PC-3 (cell line): ENCODE measurements at regions of chr3 and their contacts with region 1.

Region 1: GRCh38 chr3:65342084-65342683 is 654.4 kb upstream of the ADAMTS9 start:
- DNase-seq: peak; percentile 61
- ATAC-seq: peak; percentile 94
- H3K4me3 ChIP-seq: no peak overlapping the region
- H3K27ac ChIP-seq: no peak overlapping the region
- H3K4me1 ChIP-seq: no peaks in the 10 kb centered on the region
- H3K27me3 ChIP-seq: no peaks in the 10 kb centered on the region
- CTCF ChIP-seq: peak; percentile 65

Region 2: DNA sequence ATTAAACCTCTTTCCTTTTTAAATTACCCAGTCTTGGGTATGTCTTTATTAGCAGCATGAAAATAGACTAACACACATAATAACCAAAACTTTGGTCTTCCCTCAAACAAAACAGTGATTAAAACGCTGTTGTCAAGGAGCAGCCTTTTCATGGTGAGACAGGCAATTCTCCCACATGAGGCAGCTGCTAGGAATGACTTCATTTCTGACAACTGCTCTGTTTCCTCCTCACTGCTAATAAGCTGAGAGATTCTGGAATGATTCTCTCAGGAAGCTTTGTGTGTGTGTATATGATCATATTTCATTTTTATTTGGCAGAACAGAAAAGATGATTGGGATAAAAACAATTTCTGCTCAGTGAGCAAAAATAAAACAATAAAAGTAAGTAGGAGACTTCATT is 73.8 kb before region 1 on chr3:
- CTCF ChIA-PET with region 1: no interaction called
- POLR2A ChIA-PET with region 1: no interaction called
- intact Hi-C with region 1: no loop called
- DNase-seq: no peak
- ATAC-seq: no peak
- H3K4me3 ChIP-seq: no peak overlapping the region
- H3K27ac ChIP-seq: no peak overlapping the region
- H3K4me1 ChIP-seq: no peaks in the 10 kb centered on the region
- H3K27me3 ChIP-seq: no peaks in the 10 kb centered on the region
- CTCF ChIP-seq: no peak

Region 3: DNA sequence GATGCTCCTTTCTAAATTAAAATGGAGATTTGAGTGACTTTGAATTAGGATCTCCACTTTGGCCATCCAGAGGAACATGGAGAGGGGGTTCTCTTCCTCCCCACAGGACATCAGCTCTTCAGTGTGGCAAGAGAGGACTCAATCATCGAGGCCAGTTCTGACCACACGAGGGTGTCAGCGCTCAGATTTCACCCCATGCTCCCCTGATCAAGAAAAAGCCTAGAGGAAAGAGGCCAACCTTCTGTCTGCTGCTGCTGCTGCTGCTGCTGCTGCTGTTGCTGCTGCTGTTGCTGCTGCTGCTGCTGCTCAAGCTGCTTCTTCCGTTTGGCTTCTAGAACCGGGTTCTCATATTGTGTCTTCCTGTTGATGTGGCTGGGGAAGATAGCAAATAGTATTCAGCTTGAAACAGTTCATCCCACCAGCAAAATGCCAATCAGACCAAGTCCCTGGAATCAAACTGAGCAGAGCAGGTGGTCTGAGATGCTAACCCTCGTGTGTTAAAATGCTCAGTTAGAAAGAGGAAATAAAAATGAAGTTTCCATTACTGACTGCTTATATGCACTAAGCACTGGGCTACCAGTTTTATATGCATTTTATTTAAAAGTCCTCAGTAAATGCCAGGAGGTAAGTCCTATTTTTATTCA is 97.6 kb after region 1 on chr3:
- CTCF ChIA-PET with region 1: no interaction called
- POLR2A ChIA-PET with region 1: no interaction called
- intact Hi-C with region 1: loop called (anchors 2 kb)
- DNase-seq: peak; percentile 43
- ATAC-seq: peak; percentile 89
- H3K4me3 ChIP-seq: no peak overlapping the region
- H3K27ac ChIP-seq: no peak overlapping the region
- H3K4me1 ChIP-seq: no peaks in the 10 kb centered on the region
- H3K27me3 ChIP-seq: no peaks in the 10 kb centered on the region
- CTCF ChIP-seq: peak; percentile 43

Region 4: GRCh38 chr3:65672871-65673815 is 331.0 kb after region 1 on chr3:
- CTCF ChIA-PET with region 1: no interaction called
- POLR2A ChIA-PET with region 1: no interaction called
- intact Hi-C with region 1: loop called (anchors 2 kb)
- DNase-seq: peak; percentile 52
- ATAC-seq: peak; percentile 45
- H3K4me3 ChIP-seq: no peak overlapping the region
- H3K27ac ChIP-seq: no peak overlapping the region
- H3K4me1 ChIP-seq: no peaks in the 10 kb centered on the region
- H3K27me3 ChIP-seq: no peaks in the 10 kb centered on the region
- CTCF ChIP-seq: peak; percentile 71

Region 5: DNA sequence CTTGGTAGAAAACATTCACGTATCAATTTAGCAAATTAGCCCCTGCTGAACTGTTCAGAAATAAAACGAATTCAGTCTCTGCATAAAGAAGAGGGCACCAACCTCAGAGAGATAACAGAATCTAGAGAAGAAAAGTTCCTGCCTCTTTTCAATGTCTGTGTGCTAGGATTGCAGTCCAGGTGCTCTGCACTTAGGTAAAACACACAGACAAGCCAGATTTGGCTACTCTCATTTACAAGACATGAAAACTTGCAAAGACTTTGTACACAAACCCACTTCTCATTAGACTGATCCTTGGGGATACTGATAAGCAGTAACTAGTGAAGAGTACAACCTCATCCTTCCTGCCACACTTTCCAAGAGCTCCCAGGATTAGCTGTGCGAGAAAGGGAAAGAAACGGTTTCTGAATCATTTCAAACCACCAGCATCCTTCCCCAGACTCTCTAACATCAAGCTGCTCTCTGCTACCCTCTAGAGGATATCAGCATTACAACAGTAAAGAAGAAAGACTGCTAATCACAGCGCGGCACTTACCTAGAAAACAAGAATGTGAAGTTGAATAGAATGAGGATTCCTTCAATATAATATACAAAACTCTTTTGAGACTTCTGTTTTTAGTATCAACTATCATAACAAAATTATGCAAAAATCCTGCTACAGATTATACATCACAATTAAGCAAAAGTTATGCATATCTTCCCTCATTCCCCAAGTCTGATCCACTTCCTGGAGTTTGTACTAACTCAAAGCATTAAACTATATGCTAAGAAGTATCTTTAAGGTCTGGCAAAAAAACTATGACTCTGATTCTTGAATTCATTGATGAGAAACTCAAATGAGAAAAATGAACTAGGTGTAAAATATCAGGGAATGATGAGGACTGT is 390.1 kb after region 1 on chr3:
- CTCF ChIA-PET with region 1: no interaction called
- POLR2A ChIA-PET with region 1: no interaction called
- intact Hi-C with region 1: loop called (anchors 5 kb)
- DNase-seq: peak; percentile 64
- ATAC-seq: peak; percentile 88
- H3K4me3 ChIP-seq: no peak overlapping the region
- H3K27ac ChIP-seq: no peak overlapping the region
- H3K4me1 ChIP-seq: no peaks in the 10 kb centered on the region
- H3K27me3 ChIP-seq: no peaks in the 10 kb centered on the region
- CTCF ChIP-seq: peak; percentile 65